ENCODE measurements at regions of chr5 and their contacts with region 1.

Region 1: DNA sequence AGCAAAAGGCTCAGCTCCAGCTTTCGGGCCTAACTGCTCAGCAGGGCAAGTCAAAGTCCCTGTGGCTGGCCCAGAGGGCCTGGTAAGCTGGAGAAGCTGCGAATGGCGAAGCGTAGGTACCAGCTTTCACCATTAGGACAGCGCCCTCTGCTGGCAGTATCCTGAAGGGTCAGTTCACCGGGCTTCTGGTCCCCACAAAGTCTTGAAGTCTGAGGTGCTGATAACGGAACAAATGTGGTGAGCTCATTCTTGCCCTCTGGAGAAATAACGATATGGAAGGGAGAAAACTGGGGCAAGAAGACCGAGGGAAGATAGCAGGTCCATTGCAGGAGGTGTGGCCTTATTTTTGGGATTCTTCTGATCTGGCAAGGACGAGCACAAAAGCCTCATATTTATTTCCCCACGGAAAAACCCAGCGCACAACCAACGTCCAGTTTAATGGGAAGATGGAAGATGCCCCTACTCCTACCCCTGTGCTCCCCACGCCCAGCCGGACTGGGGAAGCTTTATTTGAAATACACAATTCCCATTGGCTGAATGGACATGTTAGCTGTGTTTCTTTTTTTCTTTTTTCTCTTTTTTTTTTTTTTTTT is 7.2 kb downstream of the SOWAHA start:
- ATAC-seq: peak; percentile 62 to 90 (median 76)
- H3K4me3 ChIP-seq: no peak overlapping the region
- H3K27ac ChIP-seq: no peak overlapping the region
- H3K4me1 ChIP-seq: no peaks in the 10 kb centered on the region

Region 2: GRCh38 chr5:131944702-131945550 is 875.3 kb before region 1 on chr5:
- in situ Hi-C with region 1: no loop called
- ATAC-seq: no peak
- H3K4me3 ChIP-seq: no peak overlapping the region
- H3K27ac ChIP-seq: no peak overlapping the region
- H3K4me1 ChIP-seq: no peaks in the 10 kb centered on the region

Region 3: GRCh38 chr5:132386644-132387286 is 433.5 kb before region 1 on chr5:
- in situ Hi-C with region 1: no loop called
- ATAC-seq: peak; percentile 17 to 61 (median 34)
- H3K4me3 ChIP-seq: no peak overlapping the region
- H3K27ac ChIP-seq: no peak overlapping the region
- H3K4me1 ChIP-seq: peaks cover 0 to 10% of the 10 kb centered on the region in 2 donors

Region 4: GRCh38 chr5:132490486-132491367 is 329.5 kb before region 1 on chr5 and contains the start of gene IRF1:
- in situ Hi-C with region 1: no loop called
- ATAC-seq: peak; percentile 59 to 90 (median 89)
- H3K4me3 ChIP-seq: peak within 1 kb of the TSS; percentile 43 to 84 (median 64)
- H3K27ac ChIP-seq: peak within 1 kb of the TSS in 1 of 2 donors; percentile 18
- H3K4me1 ChIP-seq: peaks cover 0 to 13% of the 10 kb centered on the region in 2 donors
- total RNA-seq, gene IRF1: 1.4 to 29.2 (median 9.0) TPM

Region 5: DNA sequence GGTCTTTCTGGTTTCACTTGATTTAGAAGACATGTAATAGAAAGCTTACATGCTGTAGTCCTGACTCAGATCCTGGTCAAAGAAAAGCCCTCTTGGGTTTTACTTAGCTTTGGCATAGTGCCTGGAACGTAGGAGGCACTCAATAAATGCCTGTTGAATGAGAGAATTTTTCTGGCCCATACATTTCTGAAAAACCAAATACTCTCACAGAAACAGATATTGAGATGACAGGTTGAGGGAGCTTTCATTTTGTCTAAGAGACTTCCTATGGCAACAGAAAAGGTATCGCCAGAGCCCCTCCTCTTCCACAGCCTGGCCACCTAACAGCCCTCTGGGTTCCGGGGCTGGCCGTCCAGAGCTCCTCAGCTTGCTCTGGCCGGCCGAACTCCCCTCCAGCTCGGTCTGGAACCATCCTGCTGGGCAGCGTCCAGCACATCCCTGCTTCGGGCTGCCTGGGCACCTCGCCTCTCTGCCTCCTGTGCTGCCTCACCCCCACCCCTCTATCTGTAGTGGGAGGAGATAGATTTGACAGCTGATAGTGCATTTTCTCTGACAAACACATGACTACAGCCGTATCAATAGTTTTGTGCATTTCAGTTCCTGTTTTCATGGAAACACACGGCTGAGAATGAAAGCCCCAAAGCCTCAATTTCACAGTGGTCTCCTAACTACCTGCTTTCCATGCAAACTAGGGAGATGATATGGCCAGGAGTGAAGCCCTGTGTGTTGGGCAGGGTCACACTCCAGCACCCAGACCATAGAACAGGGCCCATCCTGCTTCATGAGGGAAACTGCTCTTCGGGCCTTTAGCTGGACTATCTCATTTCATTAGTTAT is 145.4 kb before region 1 on chr5:
- in situ Hi-C with region 1: loop called in 1 of 9 experiments (anchors 25 kb)
- ATAC-seq: peak in 4 of 8 experiments; percentile 40 to 57 (median 44)
- H3K4me3 ChIP-seq: no peak overlapping the region
- H3K27ac ChIP-seq: no peak overlapping the region
- H3K4me1 ChIP-seq: no peaks in the 10 kb centered on the region

Region 6: GRCh38 chr5:133205649-133206048 is 385.4 kb after region 1 on chr5:
- in situ Hi-C with region 1: no loop called
- ATAC-seq: no peak
- H3K4me3 ChIP-seq: no peak overlapping the region
- H3K27ac ChIP-seq: no peak overlapping the region
- H3K4me1 ChIP-seq: no peaks in the 10 kb centered on the region

Measured in motor neuron (in vitro differentiated cells).